ENCODE measurements at regions of chr1 and their contacts with region 1.

Region 1: DNA sequence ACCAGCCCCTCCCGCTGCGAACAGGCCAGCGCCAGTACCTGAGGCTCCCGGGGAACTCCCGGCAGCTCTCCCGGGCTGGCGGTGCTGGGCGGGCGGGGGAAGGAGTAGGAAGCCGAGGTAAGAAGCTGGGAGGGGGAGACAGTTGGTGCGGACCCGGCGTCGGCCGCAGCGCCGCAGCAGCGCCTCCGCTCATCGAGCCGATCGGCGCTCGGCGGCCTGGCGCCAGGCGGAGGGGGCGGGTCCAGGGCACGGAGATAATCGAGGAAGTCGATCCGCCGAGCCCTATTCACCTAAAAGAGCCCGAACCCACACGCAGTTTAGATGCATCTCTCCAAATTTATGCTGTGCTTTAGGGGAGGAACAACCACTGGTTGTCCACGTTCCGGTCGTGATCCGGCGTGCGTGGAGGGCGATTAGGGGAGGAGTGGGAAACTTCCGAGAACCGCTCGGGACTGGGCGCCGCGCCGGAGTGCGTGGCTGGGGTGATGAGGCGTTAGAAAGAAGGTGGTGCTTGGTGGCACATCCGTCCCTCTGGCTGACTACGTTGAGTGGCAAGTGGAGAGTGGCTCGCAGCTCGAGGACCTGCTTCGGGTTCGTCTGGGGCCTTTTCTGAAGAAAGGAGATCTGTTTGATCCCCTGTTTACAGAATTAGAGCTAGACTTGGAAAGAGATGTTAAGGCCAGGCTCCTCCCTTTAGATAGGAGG is at the start of gene VAMP4:
- DNase-seq: peak; percentile 90
- H3K4me3 ChIP-seq: peak within 1 kb of the TSS; percentile 85
- H3K27ac ChIP-seq: peak within 1 kb of the TSS; percentile 97
- H3K4me1 ChIP-seq: peaks cover 10% of the 10 kb centered on the region
- H3K27me3 ChIP-seq: no peaks in the 10 kb centered on the region
- CTCF ChIP-seq: no peak
- total RNA-seq, gene VAMP4: 6.4 to 12.4 TPM

Region 2: DNA sequence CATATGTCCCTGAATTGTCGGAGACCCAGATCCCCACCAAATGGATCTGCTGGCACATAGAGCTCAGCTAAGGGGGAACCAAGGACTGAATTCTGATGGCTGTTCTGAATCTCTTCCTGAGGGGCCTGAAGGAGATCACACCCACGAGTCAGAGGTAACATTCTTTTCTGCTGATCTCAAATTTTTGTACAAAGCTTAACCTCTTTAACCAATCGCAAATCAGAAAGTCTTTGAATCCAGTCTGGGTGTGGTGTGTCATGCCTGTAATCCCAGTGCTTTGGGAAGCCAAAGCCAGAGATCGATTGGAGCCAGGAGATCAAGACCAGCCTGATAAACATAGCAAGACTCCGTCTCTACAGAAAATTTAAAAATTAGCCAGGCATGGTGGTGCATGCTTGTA is 319.5 kb before region 1 on chr1:
- intact Hi-C with region 1: no loop called
- DNase-seq: no peak
- H3K4me3 ChIP-seq: no peak overlapping the region
- H3K27ac ChIP-seq: no peak overlapping the region
- H3K4me1 ChIP-seq: no peaks in the 10 kb centered on the region
- H3K27me3 ChIP-seq: no peaks in the 10 kb centered on the region
- CTCF ChIP-seq: no peak

Region 3: DNA sequence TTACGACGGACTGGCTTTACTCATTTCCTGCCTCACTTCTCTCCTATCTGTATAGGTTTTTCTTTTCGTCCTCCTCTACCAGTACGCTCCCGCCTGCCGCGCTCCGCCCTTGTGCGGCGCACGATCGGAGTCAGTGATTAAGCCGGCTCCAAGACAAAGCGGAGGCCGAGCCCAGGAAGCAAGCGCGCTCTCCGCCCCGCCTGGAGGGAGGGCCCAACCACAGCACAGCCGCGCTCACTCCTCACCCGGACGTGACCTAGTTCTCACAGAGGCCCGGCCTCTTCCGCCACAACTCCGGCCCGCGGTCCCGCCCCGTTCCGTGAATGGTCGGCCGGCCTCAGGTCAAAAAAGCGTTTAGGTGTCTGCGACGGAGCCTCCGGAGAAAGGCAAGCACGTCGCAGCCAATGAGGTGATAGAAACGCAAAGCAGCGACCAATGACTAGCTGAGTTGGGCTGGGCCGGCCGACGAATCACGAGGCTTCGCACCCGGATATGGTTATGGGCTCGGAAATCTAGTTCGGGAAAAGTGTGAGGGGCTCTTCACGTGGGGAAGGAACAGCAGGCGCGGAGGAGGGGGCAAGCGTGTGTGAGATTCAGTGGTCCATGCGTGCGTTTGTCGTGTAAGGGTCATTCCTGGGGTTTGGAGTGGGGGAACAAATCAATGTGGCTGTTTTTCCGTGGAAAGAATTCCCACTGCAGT is 39.3 kb after region 1 on chr1 and contains the start of gene METTL13:
- intact Hi-C with region 1: loop called (anchors 5 kb)
- DNase-seq: peak; percentile 99
- H3K4me3 ChIP-seq: peak within 1 kb of the TSS; percentile 62
- H3K27ac ChIP-seq: peak within 1 kb of the TSS; percentile 88
- H3K4me1 ChIP-seq: peaks cover 9% of the 10 kb centered on the region
- H3K27me3 ChIP-seq: no peaks in the 10 kb centered on the region
- CTCF ChIP-seq: no peak
- total RNA-seq, gene METTL13: 19.9 to 42.7 TPM

Measured in colonic mucosa (tissue), 4 donors.